Calu3 (cell line): ENCODE measurements at regions of chr10 and their contacts with region 1.

Region 1: DNA sequence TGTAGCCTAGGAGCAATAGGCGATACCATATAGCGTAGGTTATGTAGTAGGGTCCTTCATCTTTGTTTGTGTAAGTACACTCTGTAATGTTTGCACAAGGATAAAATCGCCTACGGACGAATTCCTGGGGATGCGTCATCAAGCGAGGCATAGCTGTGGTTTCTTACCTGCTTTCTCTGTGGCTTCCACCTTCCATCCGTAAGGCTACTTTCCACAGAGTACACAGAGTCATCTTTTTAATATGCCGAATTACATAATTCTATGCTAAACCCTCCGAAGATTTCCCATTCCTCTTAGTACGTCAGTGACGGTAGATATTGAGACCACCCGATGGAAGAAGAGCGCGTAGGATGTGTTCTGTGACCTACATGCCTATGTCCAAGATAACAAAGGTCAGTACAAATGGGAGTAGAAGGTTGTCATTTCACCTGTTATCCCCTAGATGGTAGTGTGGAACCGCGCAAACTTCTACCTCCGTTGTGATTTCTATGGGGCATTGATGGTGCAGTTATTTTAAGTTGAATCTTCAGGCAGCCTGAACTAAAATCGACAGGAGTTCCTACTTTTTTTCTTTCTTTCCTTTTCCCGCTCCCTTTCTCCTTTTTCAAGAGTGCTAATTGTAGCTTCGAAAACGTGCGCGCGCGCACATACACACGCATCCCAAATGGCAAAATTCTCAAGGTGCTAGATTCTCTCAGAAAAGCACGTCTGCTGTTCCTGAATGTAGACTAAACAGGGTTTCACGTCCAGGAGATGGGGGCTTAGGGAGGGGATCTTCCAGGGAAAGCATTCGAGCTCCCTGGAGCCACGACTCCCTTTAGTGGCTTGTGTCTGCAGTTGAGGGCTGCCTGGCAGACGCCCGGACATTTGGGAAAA is 111.7 kb upstream of the MBL2 start:
- DNase-seq: peak; percentile 82
- H3K4me3 Mint-ChIP-seq: peak overlapping the region; percentile 63
- H3K27ac Mint-ChIP-seq: peak overlapping the region; percentile 70
- H3K4me1 Mint-ChIP-seq: no peaks in the 10 kb centered on the region
- H3K27me3 Mint-ChIP-seq: peaks cover 7% of the 10 kb centered on the region
- CTCF ChIP-seq: peak; percentile 75

Region 2: GRCh38 chr10:52818019-52818418 is 66.2 kb before region 1 on chr10:
- CTCF ChIA-PET with region 1: interaction called, 16 read pairs
- intact Hi-C with region 1: loop called (anchors 2 kb)
- DNase-seq: peak; percentile 30
- H3K4me3 Mint-ChIP-seq: no peak overlapping the region
- H3K27ac Mint-ChIP-seq: no peak overlapping the region
- H3K4me1 Mint-ChIP-seq: no peaks in the 10 kb centered on the region
- H3K27me3 Mint-ChIP-seq: no peaks in the 10 kb centered on the region
- CTCF ChIP-seq: peak; percentile 29